Panc1 (cell line): ENCODE measurements at regions of chr1 and their contacts with region 1.

Region 1: GRCh38 chr1:151693076-151693651 is 23.4 kb downstream of the CELF3 start:
- DNase-seq: peak; percentile 18
- ATAC-seq: 0 out of 2 replicates have a peak, but pooled peaks have one; percentile 65
- H3K4me3 ChIP-seq: no peak overlapping the region
- H3K27ac ChIP-seq: no peak overlapping the region
- H3K4me1 ChIP-seq: no peaks in the 10 kb centered on the region
- H3K27me3 ChIP-seq: no peaks in the 10 kb centered on the region
- CTCF ChIP-seq: peak; percentile 84

Region 2: DNA sequence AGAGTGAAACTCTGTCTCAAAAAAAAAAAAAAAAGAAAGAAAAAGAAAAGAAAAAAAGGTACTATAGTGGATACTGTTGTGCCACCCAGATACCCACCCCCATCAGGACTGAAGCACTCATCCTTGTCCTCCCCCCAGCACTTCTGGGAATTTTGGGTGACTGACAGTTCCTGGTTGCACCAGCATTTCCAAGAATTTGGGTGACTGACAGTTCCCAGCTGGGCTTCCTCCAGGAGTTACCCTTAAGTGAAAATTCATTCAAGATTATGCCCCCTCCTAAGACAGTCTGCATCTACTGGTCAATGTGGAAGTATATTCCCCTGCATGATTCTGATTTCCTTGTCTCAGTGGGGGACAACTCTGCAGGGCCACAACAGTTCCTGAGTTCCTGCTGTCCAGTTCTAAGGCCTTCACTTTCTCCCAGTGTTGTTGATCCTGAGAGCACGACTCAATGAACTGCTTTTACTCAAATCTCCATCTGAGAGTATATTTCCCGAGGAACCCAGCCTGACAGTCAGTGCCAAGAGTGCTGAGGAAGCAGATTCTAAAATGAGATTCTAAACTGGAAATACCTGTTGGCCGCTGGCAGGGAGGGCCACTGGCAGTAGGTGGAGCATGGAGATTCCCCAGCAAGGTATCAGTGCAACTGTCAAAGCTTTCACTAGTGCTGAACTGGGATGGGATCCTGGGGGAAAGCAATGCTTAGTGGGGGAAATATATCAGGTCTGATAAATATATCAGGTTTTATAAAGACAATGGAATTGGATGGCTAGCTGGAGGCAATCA is 46.6 kb after region 1 on chr1:
- CTCF ChIA-PET with region 1: interaction called, 4 read pairs
- POLR2A ChIA-PET with region 1: no interaction called
- in situ Hi-C with region 1: no loop called
- intact Hi-C with region 1: loop called (anchors 1 kb)
- DNase-seq: no peak
- ATAC-seq: no peak
- H3K4me3 ChIP-seq: no peak overlapping the region
- H3K27ac ChIP-seq: no peak overlapping the region
- H3K4me1 ChIP-seq: no peaks in the 10 kb centered on the region
- H3K27me3 ChIP-seq: peaks cover 2% of the 10 kb centered on the region; the same call in 1 of the 2 replicates
- CTCF ChIP-seq: no peak

Region 3: DNA sequence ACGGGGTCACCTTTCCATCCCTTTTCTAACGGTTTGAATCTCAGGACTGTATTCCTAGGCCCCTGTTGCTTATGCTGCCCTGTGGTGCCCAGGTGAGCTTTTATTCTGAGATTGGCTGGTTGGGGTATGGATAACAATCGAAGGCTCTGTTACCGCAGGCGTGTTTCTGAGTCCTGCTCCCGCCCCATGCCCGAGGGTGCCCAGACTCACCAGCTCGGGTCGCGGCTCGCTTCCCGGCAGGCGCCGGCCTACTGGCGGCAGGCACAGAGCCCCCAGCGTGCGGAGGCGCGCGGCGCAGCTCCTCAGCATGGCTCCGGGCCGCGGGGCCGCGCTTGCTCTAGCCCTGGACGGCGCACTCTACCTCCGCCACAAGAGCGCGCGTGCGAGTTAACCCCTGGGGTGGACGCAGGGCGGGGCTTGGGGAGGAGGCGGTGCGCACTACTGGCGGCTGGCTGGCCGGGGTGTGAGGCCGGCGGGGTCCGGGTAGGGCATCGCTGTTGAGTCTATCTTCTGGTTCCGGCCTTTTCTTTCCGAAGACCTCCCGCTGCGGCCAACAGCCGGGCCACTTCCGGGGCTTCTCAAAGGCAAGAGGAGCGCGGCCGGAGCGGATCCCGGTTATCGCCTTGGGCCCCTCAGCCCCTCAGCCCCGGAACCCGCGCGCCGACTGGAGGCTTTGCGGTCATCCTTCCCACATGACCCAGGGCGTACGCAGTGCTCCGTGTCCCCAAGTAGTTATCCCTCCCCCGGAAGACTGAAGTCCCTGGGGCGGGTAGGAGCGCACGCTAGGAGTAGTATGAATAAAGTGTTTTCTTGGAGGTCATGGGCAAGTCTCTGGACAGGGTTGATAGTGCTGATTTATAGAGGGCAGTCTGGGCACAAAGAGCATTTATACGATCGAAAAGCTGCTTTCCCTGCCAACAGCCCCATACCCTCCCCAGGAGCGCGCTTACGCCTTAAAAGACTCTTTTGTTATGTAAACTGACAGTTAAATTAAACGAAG is 216.3 kb after region 1 on chr1 and contains the start of gene THEM4:
- CTCF ChIA-PET with region 1: no interaction called
- POLR2A ChIA-PET with region 1: no interaction called
- in situ Hi-C with region 1: no loop called
- intact Hi-C with region 1: no loop called
- DNase-seq: peak; percentile 78
- ATAC-seq: peak; percentile 99
- H3K4me3 ChIP-seq: peak within 1 kb of the TSS; percentile 71 to 91
- H3K27ac ChIP-seq: peak within 1 kb of the TSS; percentile 98
- H3K4me1 ChIP-seq: peaks cover 9% of the 10 kb centered on the region
- H3K27me3 ChIP-seq: no peaks in the 10 kb centered on the region
- CTCF ChIP-seq: peak; percentile 53
- total RNA-seq, gene THEM4: 21.8 TPM